ENCODE measurements at regions of chr12 and their contacts with region 1.

Region 1: DNA sequence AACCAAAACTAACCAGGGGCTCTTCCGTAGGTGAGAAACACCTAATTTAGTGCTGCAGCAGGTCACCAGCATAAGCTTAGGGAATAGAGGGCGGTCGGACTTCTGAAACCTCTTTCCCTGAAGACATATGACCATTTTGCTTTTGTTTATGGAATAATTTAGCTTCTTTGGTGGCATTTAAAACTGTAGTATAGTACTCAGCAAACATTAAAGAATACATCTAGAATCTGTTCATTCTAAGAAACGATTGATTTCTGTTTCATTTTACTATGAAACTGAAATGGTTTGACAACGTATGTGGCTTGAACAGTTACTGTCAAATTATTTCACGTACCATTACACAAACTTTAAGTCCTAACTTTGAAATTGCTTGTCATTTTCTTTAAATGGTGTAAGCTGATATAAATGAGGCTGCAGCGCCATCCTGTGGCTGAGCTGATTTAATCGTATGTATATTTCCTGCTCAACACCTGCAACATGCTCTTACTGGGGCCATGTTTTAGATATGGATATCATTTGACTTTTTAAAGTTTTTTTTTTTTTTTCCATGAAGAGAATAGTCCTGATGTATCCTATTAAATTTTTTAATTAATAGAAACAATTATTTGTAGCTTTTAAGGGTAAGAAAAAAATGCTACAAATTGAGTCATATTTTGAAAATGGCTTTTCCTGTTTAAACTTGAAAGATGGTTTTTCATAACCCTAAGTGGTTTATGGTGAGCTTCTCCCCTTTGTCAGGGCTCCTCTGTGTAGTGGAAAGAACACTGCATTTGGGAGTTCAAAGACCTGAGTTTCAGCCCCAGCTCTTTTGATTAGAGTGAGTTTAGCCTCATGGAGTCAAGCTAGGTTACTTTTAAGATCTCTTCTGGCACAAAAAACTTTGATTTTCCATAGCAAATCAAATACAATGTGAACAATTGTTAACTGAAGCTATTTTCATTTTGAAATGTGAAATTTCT is 27.4 kb downstream of the CFAP54 start:
- DNase-seq: peak; percentile 72
- H3K4me3 ChIP-seq: no peak overlapping the region
- H3K27ac ChIP-seq: no peak overlapping the region
- H3K4me1 ChIP-seq: no peaks in the 10 kb centered on the region
- H3K27me3 ChIP-seq: no peaks in the 10 kb centered on the region
- CTCF ChIP-seq: peak; percentile 62

Region 2: GRCh38 chr12:96208801-96209549 is 307.8 kb before region 1 on chr12:
- intact Hi-C with region 1: loop called (anchors 5 kb)
- DNase-seq: no peak
- H3K4me3 ChIP-seq: no peak overlapping the region
- H3K27ac ChIP-seq: no peak overlapping the region
- H3K4me1 ChIP-seq: no peaks in the 10 kb centered on the region
- H3K27me3 ChIP-seq: no peaks in the 10 kb centered on the region
- CTCF ChIP-seq: no peak

Measured in colonic mucosa (tissue), 4 donors.